H1 (cell line): ENCODE measurements at regions of chr4 and their contacts with region 1.

Region 1: GRCh38 chr4:53929955-53930798 is 134.2 kb downstream of the CHIC2 start:
- DNase-seq: peak; percentile 49 to 65
- H3K4me3 ChIP-seq: no peak overlapping the region
- H3K27ac ChIP-seq: no peak overlapping the region
- H3K4me1 ChIP-seq: no peaks in the 10 kb centered on the region
- H3K27me3 ChIP-seq: no peaks in the 10 kb centered on the region; a peak in 1 of 7 replicates
- CTCF ChIP-seq: peak; percentile 68 to 95 (median 83)
- EP300 ChIP-seq: no peak
- POLR2A ChIP-seq: no peak
- RAD21 ChIP-seq: peak; percentile 90 to 91

Region 2: DNA sequence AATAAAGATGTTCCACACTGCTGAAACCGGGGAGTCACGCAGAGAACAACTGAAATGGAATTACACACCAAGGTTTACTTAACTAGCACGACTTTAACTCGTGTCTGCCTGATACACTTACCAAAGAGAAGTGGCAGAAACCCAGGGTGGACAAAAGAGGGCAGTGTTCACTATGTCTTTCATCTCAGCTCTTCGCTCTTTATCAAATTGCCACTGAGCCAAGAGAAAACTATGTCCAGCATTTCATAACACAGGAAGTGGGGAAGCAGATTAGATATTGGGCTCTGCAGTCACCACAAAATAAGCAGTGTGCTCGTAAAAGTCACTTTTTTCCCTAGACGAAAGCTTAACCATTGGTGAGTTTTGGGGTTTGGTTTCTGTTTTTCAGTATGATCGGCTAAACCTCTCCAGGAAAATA is 21.5 kb before region 1 on chr4:
- CTCF ChIA-PET with region 1: interaction called, 53 read pairs
- POLR2A ChIA-PET with region 1: no interaction called
- DNase-seq: no peak
- H3K4me3 ChIP-seq: no peak overlapping the region
- H3K27ac ChIP-seq: no peak overlapping the region
- H3K4me1 ChIP-seq: peaks cover 0 to 7% (median 3%) of the 10 kb centered on the region in 4 experiments; a peak in 3 of 7 replicates
- H3K27me3 ChIP-seq: no peaks in the 10 kb centered on the region; a peak in 2 of 7 replicates
- CTCF ChIP-seq: peak in 2 of 3 experiments; percentile 55 to 76; a peak in 3 of 4 replicates
- EP300 ChIP-seq: no peak
- POLR2A ChIP-seq: no peak
- RAD21 ChIP-seq: peak; percentile 83 to 85

Region 3: GRCh38 chr4:54064295-54065111 is 134.3 kb after region 1 on chr4 and contains the start of gene CHIC2:
- CTCF ChIA-PET with region 1: interaction called, 17 read pairs
- POLR2A ChIA-PET with region 1: no interaction called
- DNase-seq: peak; percentile 72 to 94
- H3K4me3 ChIP-seq: peak within 1 kb of the TSS; percentile 85 to 97 (median 91)
- H3K27ac ChIP-seq: peak within 1 kb of the TSS; percentile 57
- H3K4me1 ChIP-seq: peaks cover 0 to 12% (median 3%) of the 10 kb centered on the region in 4 experiments; a peak in 2 of 7 replicates
- H3K27me3 ChIP-seq: no peaks in the 10 kb centered on the region; a peak in 1 of 7 replicates
- CTCF ChIP-seq: no peak
- EP300 ChIP-seq: no peak
- POLR2A ChIP-seq: peak in 1 of 2 experiments; percentile 61; a peak in 1 of 3 replicates
- RAD21 ChIP-seq: no peak
- total RNA-seq, gene CHIC2: 10.9 and 11.9 TPM in 2 replicates

Region 4: DNA sequence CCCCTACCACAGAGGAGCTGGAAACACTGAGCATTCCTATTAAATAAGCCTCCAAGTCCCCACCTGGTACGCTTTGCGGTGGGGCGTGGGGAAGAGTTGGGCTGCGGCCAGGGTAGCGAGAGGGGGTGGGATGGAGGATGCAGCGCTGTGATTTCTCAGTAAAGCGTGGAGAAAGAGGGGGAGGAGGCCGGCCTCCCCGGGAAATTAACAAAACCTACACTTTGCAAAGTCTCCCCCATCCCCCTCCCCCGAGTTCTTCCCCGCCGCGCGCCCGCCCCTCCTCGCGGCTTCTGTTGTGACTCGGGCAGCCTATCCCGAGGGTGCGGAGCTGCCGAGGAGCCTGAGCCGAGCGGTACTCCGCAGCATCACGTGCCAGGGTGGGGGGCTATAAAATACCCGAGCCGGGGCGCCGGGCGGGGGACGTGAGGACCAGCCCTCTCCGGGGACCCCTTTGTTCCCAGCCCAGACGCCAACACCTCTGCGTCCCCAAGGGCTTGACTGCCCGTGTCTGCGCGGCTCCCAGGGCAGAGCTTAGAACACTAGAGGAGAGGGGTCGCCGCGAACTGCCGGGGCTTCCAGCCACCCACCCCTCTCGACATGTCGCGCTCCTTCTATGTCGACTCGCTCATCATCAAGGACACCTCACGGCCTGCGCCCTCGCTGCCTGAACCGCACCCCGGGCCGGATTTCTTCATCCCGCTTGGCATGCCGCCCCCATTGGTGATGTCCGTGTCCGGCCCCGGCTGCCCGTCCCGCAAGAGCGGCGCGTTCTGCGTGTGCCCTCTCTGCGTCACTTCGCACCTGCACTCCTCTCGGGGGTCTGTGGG is 169.8 kb after region 1 on chr4 and contains the start of gene GSX2:
- CTCF ChIA-PET with region 1: interaction called, 13 read pairs
- POLR2A ChIA-PET with region 1: no interaction called
- DNase-seq: peak in 1 of 2 experiments; percentile 74
- H3K4me3 ChIP-seq: peak within 1 kb of the TSS; percentile 8 to 56 (median 38); a peak in 7 of 8 replicates
- H3K27ac ChIP-seq: no peak within 1 kb of the TSS
- H3K4me1 ChIP-seq: peaks cover 22 to 69% (median 32%) of the 10 kb centered on the region in 4 experiments
- H3K27me3 ChIP-seq: peaks cover 86 to 100% (median 98%) of the 10 kb centered on the region in 4 experiments
- CTCF ChIP-seq: no peak
- EP300 ChIP-seq: no peak
- POLR2A ChIP-seq: no peak
- RAD21 ChIP-seq: no peak
- total RNA-seq, gene GSX2: not detected in 2 replicates

Region 5: GRCh38 chr4:54228056-54228527 is 297.9 kb after region 1 on chr4:
- CTCF ChIA-PET with region 1: interaction called, 53 read pairs
- POLR2A ChIA-PET with region 1: no interaction called
- DNase-seq: peak in 1 of 2 experiments; percentile 93
- H3K4me3 ChIP-seq: peak overlapping the region; percentile 32 to 85 (median 50); a peak in 7 of 8 replicates
- H3K27ac ChIP-seq: no peak overlapping the region
- H3K4me1 ChIP-seq: peaks cover 0 to 34% (median 23%) of the 10 kb centered on the region in 4 experiments; a peak in 6 of 7 replicates
- H3K27me3 ChIP-seq: peaks cover 67 to 97% (median 94%) of the 10 kb centered on the region in 4 experiments
- CTCF ChIP-seq: peak in 2 of 3 experiments; percentile 77 to 93; a peak in 3 of 4 replicates
- EP300 ChIP-seq: peak in 1 of 2 experiments; percentile 52; a peak in 1 of 3 replicates
- POLR2A ChIP-seq: no peak
- RAD21 ChIP-seq: peak; percentile 95 to 97